ENCODE measurements at regions of chr18 and their contacts with region 1.

Region 1: GRCh38 chr18:3245853-3246634 is 1.6 kb upstream of the MYL12A start:
- DNase-seq: peak; percentile 81
- ATAC-seq: peak; percentile 80
- H3K4me3 ChIP-seq: peak overlapping the region; percentile 66 to 93 (median 92)
- H3K27ac ChIP-seq: peak overlapping the region; percentile 93
- H3K4me1 ChIP-seq: peaks cover 45% of the 10 kb centered on the region
- H3K27me3 ChIP-seq: no peaks in the 10 kb centered on the region; a peak in 2 of 5 replicates
- CTCF ChIP-seq: peak; percentile 99
- EP300 ChIP-seq: no peak
- POLR2A ChIP-seq: peak in 1 of 2 experiments; percentile 41; a peak in 3 of 4 replicates
- RAD21 ChIP-seq: peak; percentile 99

Region 2: DNA sequence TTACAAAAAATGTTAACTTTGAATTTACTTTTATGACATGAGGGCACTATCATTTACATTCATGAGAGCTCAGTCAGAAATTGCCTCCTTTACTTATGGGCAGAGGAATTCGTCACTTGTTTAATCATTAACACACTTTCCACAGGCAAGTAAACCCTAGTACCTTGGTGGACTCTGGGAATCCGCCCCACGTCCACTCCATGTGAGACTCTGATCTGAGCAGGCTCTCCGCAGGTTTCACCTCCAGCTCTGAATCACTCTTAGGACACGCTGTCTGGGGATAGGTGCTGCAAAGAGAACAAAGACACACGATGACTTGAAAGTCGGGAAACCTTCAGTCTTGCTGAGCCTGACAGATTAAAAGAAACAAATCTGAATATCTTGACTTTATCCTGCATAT is 306.7 kb before region 1 on chr18:
- CTCF ChIA-PET with region 1: no interaction called
- POLR2A ChIA-PET with region 1: interaction called, 27 read pairs
- in situ Hi-C with region 1: loop called (anchors 5 kb)
- intact Hi-C with region 1: no loop called
- DNase-seq: peak; percentile 90
- ATAC-seq: peak; percentile 99
- H3K4me3 ChIP-seq: no peak overlapping the region; a peak in 1 of 6 replicates
- H3K27ac ChIP-seq: peak overlapping the region; percentile 72
- H3K4me1 ChIP-seq: peaks cover 36% of the 10 kb centered on the region
- H3K27me3 ChIP-seq: no peaks in the 10 kb centered on the region
- CTCF ChIP-seq: no peak
- EP300 ChIP-seq: peak in 1 of 2 experiments; percentile 51; a peak in 1 of 4 replicates
- POLR2A ChIP-seq: peak; percentile 53 to 63; a peak in 2 of 4 replicates
- RAD21 ChIP-seq: no peak

Region 3: DNA sequence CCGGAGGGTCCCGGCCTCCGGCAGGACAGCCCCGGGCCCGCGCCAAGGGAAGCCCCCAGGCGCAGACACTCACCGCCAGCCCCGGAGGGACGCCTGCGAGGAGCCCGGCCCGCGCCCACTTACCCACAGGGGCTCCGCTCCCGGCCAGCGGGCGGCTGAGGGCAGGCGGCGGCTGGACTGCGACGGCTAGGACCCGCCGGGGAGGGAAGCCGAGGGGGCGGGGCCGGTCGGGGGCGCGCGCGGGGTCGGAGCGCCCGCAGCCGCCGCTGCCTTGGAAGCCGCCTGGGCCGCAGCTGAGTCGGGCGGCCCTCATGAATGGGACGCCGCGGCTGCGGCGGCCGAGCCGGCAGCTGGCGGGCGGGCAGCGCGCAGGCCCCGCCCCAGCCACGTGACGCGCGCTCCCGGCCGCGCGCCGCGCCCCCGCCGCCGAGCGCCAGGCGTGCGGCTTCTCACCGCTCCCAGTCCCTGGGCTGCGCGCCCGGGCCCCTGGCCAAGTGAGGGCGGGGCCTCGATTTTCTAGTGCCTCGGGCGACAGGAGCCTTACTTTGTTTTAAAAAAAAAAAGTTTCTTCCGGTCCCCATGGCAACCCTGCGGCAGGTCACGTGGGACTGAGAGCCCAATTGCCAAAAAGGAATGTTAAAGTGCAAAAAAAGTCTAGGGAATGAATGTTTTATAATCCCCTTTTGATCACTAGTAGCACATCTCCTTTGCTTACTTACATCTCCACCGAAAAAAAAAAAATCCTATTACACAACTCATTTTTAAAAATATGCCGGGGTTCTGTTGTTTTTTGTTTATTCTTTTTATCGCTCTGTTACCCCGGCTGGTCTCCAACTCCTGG is 232.9 kb before region 1 on chr18 and contains the start of gene LPIN2:
- CTCF ChIA-PET with region 1: no interaction called
- POLR2A ChIA-PET with region 1: interaction called, 13 read pairs
- in situ Hi-C with region 1: no loop called
- intact Hi-C with region 1: loop called (anchors 2 kb)
- DNase-seq: peak; percentile 95
- ATAC-seq: peak; percentile 83
- H3K4me3 ChIP-seq: peak within 1 kb of the TSS; percentile 80 to 85 (median 84)
- H3K27ac ChIP-seq: peak within 1 kb of the TSS; percentile 94
- H3K4me1 ChIP-seq: peaks cover 76% of the 10 kb centered on the region
- H3K27me3 ChIP-seq: no peaks in the 10 kb centered on the region; a peak in 1 of 5 replicates
- CTCF ChIP-seq: no peak
- EP300 ChIP-seq: peak in 1 of 2 experiments; percentile 20; a peak in 1 of 4 replicates
- POLR2A ChIP-seq: peak; percentile 55 to 66
- RAD21 ChIP-seq: peak; percentile 72
- total RNA-seq, gene LPIN2: 46.0 and 59.5 TPM in 2 replicates

Region 4: DNA sequence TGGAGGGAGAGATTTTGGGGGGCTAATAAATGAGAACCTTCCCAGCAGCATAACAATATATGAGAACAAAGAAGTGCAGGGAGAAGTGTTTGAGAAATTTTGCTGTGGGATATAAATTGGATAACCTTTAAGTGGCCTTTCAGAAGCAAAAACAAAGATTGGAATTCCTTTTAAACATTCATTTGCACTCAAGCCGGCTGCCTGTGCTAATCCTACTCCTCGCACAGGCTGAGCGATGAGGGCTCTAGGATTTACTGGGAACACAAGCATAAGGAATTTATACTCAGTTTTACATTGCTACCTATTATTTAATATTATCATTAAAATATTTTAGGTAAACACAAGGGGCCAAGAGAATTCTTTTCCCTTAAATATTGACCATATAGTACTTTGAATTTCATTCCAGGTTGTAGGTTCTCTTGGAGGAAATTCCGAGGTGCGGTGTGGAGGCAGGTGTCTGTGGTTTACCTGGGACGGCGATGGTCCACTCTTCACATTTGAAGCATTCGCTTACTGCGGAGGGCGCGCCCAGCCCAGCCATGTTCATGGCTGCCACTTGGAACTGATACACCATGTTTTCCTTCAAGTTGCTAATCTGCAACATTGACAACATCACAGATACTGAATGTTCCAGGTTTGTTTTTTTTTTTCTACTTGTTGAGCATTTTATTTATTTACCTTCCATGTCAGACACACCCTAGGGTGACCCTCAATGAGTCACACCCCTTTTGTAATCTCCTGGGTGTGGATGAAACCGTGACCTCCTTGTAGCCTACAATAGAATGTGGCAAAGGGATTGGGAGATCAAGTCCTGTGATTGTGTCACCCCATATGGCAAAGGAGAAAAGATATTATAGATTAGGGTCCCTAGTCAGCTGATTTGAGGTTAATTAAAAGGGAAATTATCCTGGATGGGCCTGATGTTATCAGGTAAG is 126.4 kb before region 1 on chr18:
- CTCF ChIA-PET with region 1: no interaction called
- POLR2A ChIA-PET with region 1: interaction called, 13 read pairs
- in situ Hi-C with region 1: no loop called
- intact Hi-C with region 1: no loop called
- DNase-seq: peak; percentile 60
- ATAC-seq: no peak
- H3K4me3 ChIP-seq: no peak overlapping the region
- H3K27ac ChIP-seq: peak overlapping the region; percentile 97
- H3K4me1 ChIP-seq: peaks cover 72% of the 10 kb centered on the region
- H3K27me3 ChIP-seq: no peaks in the 10 kb centered on the region
- CTCF ChIP-seq: no peak
- EP300 ChIP-seq: peak in 1 of 2 experiments; percentile 58; a peak in 1 of 4 replicates
- POLR2A ChIP-seq: no peak
- RAD21 ChIP-seq: no peak

Region 5: GRCh38 chr18:3186678-3187658 is 59.1 kb before region 1 on chr18:
- CTCF ChIA-PET with region 1: interaction called, 7 read pairs
- POLR2A ChIA-PET with region 1: interaction called, 6 read pairs
- in situ Hi-C with region 1: no loop called
- intact Hi-C with region 1: loop called (anchors 1 kb)
- DNase-seq: peak; percentile 59
- ATAC-seq: peak; percentile 64
- H3K4me3 ChIP-seq: no peak overlapping the region
- H3K27ac ChIP-seq: no peak overlapping the region
- H3K4me1 ChIP-seq: peaks cover 27% of the 10 kb centered on the region
- H3K27me3 ChIP-seq: no peaks in the 10 kb centered on the region
- CTCF ChIP-seq: no peak
- EP300 ChIP-seq: no peak
- POLR2A ChIP-seq: no peak
- RAD21 ChIP-seq: no peak

Region 6: GRCh38 chr18:3217948-3218647 is 27.9 kb before region 1 on chr18:
- CTCF ChIA-PET with region 1: no interaction called
- POLR2A ChIA-PET with region 1: interaction called, 28 read pairs
- in situ Hi-C with region 1: no loop called
- intact Hi-C with region 1: no loop called
- DNase-seq: peak; percentile 96
- ATAC-seq: peak; percentile 99
- H3K4me3 ChIP-seq: peak overlapping the region in 2 of 3 experiments; percentile 19 to 20; a peak in 1 of 6 replicates
- H3K27ac ChIP-seq: peak overlapping the region; percentile 76
- H3K4me1 ChIP-seq: peaks cover 50% of the 10 kb centered on the region
- H3K27me3 ChIP-seq: no peaks in the 10 kb centered on the region
- CTCF ChIP-seq: no peak
- EP300 ChIP-seq: peak in 1 of 2 experiments; percentile 82; a peak in 2 of 4 replicates
- POLR2A ChIP-seq: no peak
- RAD21 ChIP-seq: no peak

Region 7: GRCh38 chr18:3261371-3262246 is 15.6 kb after region 1 on chr18 and contains the start of gene MYL12B:
- CTCF ChIA-PET with region 1: no interaction called
- POLR2A ChIA-PET with region 1: interaction called, 48 read pairs
- in situ Hi-C with region 1: no loop called
- intact Hi-C with region 1: loop called (anchors 2 kb)
- DNase-seq: peak; percentile 72
- ATAC-seq: peak; percentile 92
- H3K4me3 ChIP-seq: peak within 1 kb of the TSS; percentile 90 to 96 (median 94)
- H3K27ac ChIP-seq: peak within 1 kb of the TSS; percentile 96
- H3K4me1 ChIP-seq: peaks cover 64% of the 10 kb centered on the region
- H3K27me3 ChIP-seq: no peaks in the 10 kb centered on the region; a peak in 2 of 5 replicates
- CTCF ChIP-seq: no peak
- EP300 ChIP-seq: peak in 1 of 2 experiments; percentile 50; a peak in 1 of 4 replicates
- POLR2A ChIP-seq: peak; percentile 70 to 75
- RAD21 ChIP-seq: peak; percentile 60; the same call in 1 of the 2 replicates
- total RNA-seq, gene MYL12B: 340 and 475 TPM in 2 replicates

Region 8: GRCh38 chr18:3281456-3282400 is 35.7 kb after region 1 on chr18:
- CTCF ChIA-PET with region 1: no interaction called
- POLR2A ChIA-PET with region 1: no interaction called
- in situ Hi-C with region 1: no loop called
- intact Hi-C with region 1: no loop called
- DNase-seq: peak; percentile 67
- ATAC-seq: peak; percentile 64
- H3K4me3 ChIP-seq: no peak overlapping the region
- H3K27ac ChIP-seq: no peak overlapping the region
- H3K4me1 ChIP-seq: peaks cover 32% of the 10 kb centered on the region
- H3K27me3 ChIP-seq: peaks cover 0 to 17% of the 10 kb centered on the region in 2 experiments; a peak in 3 of 5 replicates
- CTCF ChIP-seq: peak; percentile 71
- EP300 ChIP-seq: no peak
- POLR2A ChIP-seq: no peak
- RAD21 ChIP-seq: peak; percentile 63